Heart right ventricle (tissue), 16 donors: ENCODE measurements at regions of chr14 and their contacts with region 1.

Region 1: GRCh38 chr14:68268197-68268596 is 448.6 kb downstream of the RAD51B start:
- DNase-seq: no peak
- ATAC-seq: peak in 5 of 8 donors; percentile 18 to 72 (median 34)
- H3K4me3 ChIP-seq: no peak overlapping the region
- H3K27ac ChIP-seq: peak overlapping the region in 5 of 10 donors; percentile 12 to 86 (median 55)
- H3K4me1 ChIP-seq: peaks cover 0 to 81% (median 17%) of the 10 kb centered on the region in 9 donors
- H3K27me3 ChIP-seq: no peaks in the 10 kb centered on the region
- CTCF ChIP-seq: no peak

Region 2: GRCh38 chr14:68020999-68021663 is 247.1 kb before region 1 on chr14:
- intact Hi-C with region 1: no loop called
- DNase-seq: no peak
- ATAC-seq: peak in 2 of 8 donors; percentile 42 to 44
- H3K4me3 ChIP-seq: no peak overlapping the region
- H3K27ac ChIP-seq: no peak overlapping the region
- H3K4me1 ChIP-seq: peaks cover 0 to 13% (median 0%) of the 10 kb centered on the region in 9 donors
- H3K27me3 ChIP-seq: no peaks in the 10 kb centered on the region
- CTCF ChIP-seq: no peak

Region 3: DNA sequence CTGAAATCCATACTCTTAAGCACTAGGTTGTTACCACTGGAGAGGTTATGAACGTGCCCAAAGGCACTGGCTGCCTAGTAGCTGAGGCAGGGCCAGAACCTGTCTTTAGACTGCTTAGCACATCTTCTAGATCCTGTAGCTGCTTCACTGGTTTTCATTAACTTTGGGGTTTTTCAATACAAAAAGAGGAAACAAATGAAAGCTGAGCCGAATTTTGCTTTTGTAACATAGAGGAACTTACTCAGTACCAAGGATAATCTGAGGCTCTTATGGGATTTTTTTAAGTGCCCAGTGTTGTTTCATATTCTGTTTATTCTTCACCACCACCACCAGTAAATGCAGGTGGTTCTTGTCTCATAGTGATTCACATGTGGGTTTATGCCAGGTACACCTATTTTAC is 52.6 kb before region 1 on chr14:
- intact Hi-C with region 1: no loop called
- DNase-seq: no peak
- ATAC-seq: no peak
- H3K4me3 ChIP-seq: no peak overlapping the region
- H3K27ac ChIP-seq: no peak overlapping the region
- H3K4me1 ChIP-seq: peaks cover 0 to 33% (median 9%) of the 10 kb centered on the region in 9 donors
- H3K27me3 ChIP-seq: no peaks in the 10 kb centered on the region
- CTCF ChIP-seq: no peak

Region 4: DNA sequence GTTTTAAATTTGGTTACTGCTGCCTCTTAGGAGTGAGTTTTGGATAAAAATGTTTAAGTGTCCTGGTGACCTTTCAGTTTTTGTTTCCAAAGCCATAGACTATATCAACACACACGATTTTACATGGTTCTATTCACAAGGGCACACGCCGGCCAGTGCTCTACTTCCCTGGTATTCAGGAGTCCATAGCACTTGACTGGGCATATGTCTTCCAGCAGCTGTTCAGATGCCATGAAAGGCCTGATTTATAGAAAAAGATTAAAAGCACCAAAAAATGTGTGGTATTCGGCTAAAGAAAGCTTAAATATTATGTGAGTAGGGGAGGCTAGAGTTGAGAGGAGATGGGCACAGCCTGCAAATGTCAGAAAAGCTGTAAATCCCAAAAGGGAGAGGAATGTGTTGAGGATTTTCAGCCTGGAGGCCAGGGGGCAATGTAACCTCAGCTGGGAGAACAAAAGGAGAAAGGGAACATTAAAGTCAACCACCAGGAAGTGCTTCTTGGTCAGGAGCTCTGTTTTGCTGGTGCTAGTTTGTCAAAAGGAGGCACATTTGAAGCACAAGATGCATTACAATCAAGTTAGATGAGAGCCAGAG is 29.8 kb after region 1 on chr14:
- intact Hi-C with region 1: no loop called
- DNase-seq: no peak
- ATAC-seq: peak in 1 of 8 donors; percentile 44
- H3K4me3 ChIP-seq: no peak overlapping the region
- H3K27ac ChIP-seq: peak overlapping the region in 2 of 10 donors; percentile 12 to 57
- H3K4me1 ChIP-seq: peaks cover 0 to 42% (median 26%) of the 10 kb centered on the region in 9 donors
- H3K27me3 ChIP-seq: no peaks in the 10 kb centered on the region
- CTCF ChIP-seq: peak in 4 of 9 donors; percentile 11 to 41 (median 28)

Region 5: DNA sequence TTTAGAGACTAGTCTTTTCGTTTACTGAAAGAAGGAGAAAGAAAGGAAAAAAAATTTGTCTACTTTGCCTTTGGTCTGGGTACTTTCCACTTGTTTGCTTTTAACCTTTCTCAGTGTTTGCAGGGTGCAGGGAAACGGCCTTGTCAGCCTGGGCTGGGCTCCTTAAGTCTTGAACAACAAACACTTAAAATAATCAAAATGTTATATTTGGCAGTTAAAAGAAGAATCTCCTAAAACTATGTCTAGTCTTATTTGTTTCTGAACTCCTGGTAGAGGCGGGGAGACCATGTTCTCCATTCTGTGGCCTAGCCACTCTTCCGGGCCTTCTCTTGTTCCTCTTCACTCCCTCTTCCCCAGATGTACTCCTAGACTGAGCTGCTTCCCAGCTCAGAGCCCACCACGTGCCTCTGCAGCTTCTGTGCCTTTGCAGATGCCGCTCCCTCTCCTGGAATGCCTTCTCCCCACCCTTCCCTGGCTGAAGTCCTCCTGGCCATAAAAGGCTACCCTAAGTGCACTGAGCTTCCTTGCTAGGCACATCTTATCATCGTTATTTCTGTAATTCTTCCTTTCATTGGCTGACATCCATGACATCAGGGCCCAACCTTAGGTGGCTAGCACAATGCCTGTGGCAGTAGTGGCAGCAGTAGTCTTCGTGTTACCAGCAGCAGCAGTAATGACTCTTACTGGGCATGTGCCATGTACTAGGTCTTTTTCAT is 91.8 kb after region 1 on chr14:
- intact Hi-C with region 1: loop called in 1 of 10 experiments (anchors 10 kb)
- DNase-seq: peak; percentile 35 to 40
- ATAC-seq: peak; percentile 52 to 86 (median 76)
- H3K4me3 ChIP-seq: no peak overlapping the region
- H3K27ac ChIP-seq: peak overlapping the region in 7 of 10 donors; percentile 8 to 88 (median 53)
- H3K4me1 ChIP-seq: peaks cover 0 to 53% (median 19%) of the 10 kb centered on the region in 9 donors
- H3K27me3 ChIP-seq: no peaks in the 10 kb centered on the region
- CTCF ChIP-seq: no peak

Region 6: GRCh38 chr14:68377459-68377858 is 109.3 kb after region 1 on chr14:
- intact Hi-C with region 1: loop called in 1 of 10 experiments (anchors 10 kb)
- DNase-seq: peak; percentile 54 to 77
- ATAC-seq: peak; percentile 84 to 95 (median 90)
- H3K4me3 ChIP-seq: peak overlapping the region in 1 of 10 donors; percentile 2
- H3K27ac ChIP-seq: peak overlapping the region; percentile 54 to 89 (median 80)
- H3K4me1 ChIP-seq: peaks cover 4 to 76% (median 38%) of the 10 kb centered on the region in 9 donors
- H3K27me3 ChIP-seq: no peaks in the 10 kb centered on the region
- CTCF ChIP-seq: no peak

Region 7: GRCh38 chr14:68510201-68511128 is 242.3 kb after region 1 on chr14:
- intact Hi-C with region 1: loop called in 1 of 10 experiments (anchors 10 kb)
- DNase-seq: peak; percentile 56 to 65
- ATAC-seq: peak in 7 of 8 donors; percentile 31 to 70 (median 59)
- H3K4me3 ChIP-seq: no peak overlapping the region
- H3K27ac ChIP-seq: peak overlapping the region in 9 of 10 donors; percentile 3 to 74 (median 53)
- H3K4me1 ChIP-seq: peaks cover 12 to 74% (median 61%) of the 10 kb centered on the region in 9 donors
- H3K27me3 ChIP-seq: no peaks in the 10 kb centered on the region
- CTCF ChIP-seq: no peak